H1 (cell line): ENCODE measurements at regions of chr17 and their contacts with region 1.

Region 1: DNA sequence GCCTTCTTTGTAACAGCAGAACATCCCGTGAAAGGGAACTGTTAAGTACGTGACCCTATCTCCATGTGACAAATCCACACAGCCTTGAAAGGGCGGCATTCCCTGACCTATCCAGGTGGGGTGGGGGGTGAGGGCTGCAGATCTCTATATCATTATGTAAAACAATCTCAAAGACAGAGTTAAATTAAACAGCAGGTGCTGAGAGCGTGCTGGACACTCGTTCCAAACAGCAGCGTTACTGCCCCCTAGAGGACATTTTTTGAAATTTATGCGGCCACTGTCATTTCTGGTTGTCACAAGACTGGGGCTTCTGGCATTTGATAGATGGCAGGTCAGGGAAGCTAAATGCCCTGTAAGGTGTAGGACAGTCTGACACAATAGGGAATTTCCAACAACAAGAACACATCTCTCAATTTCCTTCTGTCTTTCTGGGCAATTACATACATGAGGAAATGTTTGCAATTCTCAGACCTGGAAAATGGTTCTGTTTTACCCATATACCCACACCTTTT is 6.7 kb upstream of the SLC25A39 start:
- DNase-seq: peak in 1 of 2 experiments; percentile 86
- H3K4me3 ChIP-seq: no peak overlapping the region
- H3K27ac ChIP-seq: no peak overlapping the region
- H3K4me1 ChIP-seq: peaks cover 0 to 2% (median 2%) of the 10 kb centered on the region in 4 experiments; a peak in 4 of 7 replicates
- H3K27me3 ChIP-seq: peaks cover 0 to 2% (median under 1%) of the 10 kb centered on the region in 4 experiments; a peak in 3 of 7 replicates
- CTCF ChIP-seq: peak; percentile 53 to 79 (median 77)
- EP300 ChIP-seq: no peak
- POLR2A ChIP-seq: no peak
- RAD21 ChIP-seq: peak; percentile 66 to 73

Region 2: GRCh38 chr17:44199553-44200477 is 131.5 kb before region 1 on chr17 and contains the start of gene ATXN7L3:
- CTCF ChIA-PET with region 1: interaction called, 19 read pairs
- POLR2A ChIA-PET with region 1: interaction called, 5 read pairs
- DNase-seq: peak; percentile 92 to 97
- H3K4me3 ChIP-seq: peak within 1 kb of the TSS; percentile 77 to 98 (median 82)
- H3K27ac ChIP-seq: peak within 1 kb of the TSS; percentile 66
- H3K4me1 ChIP-seq: peaks cover 3 to 23% (median 8%) of the 10 kb centered on the region in 4 experiments
- H3K27me3 ChIP-seq: no peaks in the 10 kb centered on the region
- CTCF ChIP-seq: no peak
- EP300 ChIP-seq: no peak
- POLR2A ChIP-seq: peak; percentile 25 to 46; a peak in 2 of 3 replicates
- RAD21 ChIP-seq: no peak
- total RNA-seq, gene ATXN7L3: 103 and 106 TPM in 2 replicates

Region 3: DNA sequence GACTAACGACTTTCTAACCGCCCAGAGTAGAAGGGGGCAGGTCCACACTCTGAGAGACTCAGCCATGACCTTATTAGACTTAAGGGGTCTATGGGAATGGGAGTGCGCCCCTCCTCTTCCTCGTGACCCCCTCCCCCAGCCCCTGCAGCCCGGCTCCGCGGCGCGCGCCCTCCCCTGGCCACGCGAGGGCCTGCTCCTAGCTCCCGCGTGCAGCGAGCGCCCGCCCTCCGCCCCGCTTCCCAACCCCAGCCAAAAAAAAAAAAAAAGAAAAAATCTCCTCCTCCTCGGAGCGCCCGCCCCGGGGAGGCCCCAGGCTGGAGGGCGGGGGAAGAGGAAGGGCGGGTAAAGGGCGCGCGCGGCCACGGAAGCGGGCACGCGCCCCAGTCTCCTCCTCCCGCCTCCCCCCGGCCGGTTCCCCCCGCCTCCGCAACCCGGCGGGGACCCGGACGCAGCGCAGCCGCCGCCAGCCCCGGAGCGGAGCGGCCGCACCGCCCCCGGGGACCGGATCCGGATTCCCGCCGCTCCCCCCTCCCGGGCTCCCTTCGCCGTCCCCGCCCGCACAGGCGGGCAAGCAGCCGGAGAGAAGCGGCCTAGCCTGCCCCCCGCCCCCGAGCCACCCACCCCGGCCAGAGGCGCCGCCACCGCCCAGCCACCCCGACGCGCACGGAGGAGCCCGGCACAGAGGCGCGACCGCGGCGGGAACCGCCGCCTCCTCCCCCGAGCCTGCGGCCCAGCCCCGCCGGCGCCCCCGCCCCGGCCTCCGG is 112.8 kb before region 1 on chr17:
- CTCF ChIA-PET with region 1: interaction called, 158 read pairs
- POLR2A ChIA-PET with region 1: interaction called, 5 read pairs
- DNase-seq: peak in 1 of 2 experiments; percentile 83
- H3K4me3 ChIP-seq: peak overlapping the region; percentile 67 to 100 (median 84)
- H3K27ac ChIP-seq: peak overlapping the region; percentile 76; the same call in 1 of the 2 replicates
- H3K4me1 ChIP-seq: peaks cover 4 to 21% (median 5%) of the 10 kb centered on the region in 4 experiments; a peak in 6 of 7 replicates
- H3K27me3 ChIP-seq: no peaks in the 10 kb centered on the region
- CTCF ChIP-seq: peak; percentile 18 to 62 (median 57)
- EP300 ChIP-seq: 0 out of 3 replicates have a peak, but pooled peaks of 1 of the 2 experiments have one; percentile 19
- POLR2A ChIP-seq: peak; percentile 16 to 38; a peak in 2 of 3 replicates
- RAD21 ChIP-seq: peak; percentile 8 to 39; a peak in 3 of 4 replicates

Region 4: DNA sequence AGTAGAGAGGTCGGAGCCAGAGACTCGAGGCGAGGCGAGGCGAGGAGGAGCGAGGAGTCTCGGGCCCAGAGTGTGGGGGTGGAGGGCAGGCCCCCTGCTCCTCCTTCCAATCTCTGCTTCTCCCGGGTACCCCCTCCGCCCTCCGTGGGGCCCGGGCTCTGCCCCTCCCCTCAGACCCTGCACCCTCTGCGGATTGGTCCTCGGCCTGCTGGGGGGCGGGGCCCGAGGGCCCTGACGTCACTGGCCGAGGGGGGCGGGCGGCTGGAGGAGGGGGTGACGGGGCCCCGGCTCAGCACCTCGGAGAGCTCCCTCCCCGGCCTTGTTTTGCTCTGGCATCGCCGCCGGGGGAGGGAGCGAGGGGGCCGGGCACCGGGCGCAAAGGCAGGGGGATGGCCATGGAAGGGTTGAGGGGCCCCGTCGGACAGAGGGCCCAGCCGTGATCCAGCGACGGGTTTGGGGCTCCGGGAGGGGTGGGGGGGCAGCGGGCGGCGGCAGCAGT is 22.9 kb before region 1 on chr17 and contains the start of gene RUNDC3A:
- CTCF ChIA-PET with region 1: interaction called, 14 read pairs
- POLR2A ChIA-PET with region 1: interaction called, 28 read pairs
- DNase-seq: peak in 1 of 2 experiments; percentile 99
- H3K4me3 ChIP-seq: peak within 1 kb of the TSS; percentile 43 to 67 (median 54)
- H3K27ac ChIP-seq: no peak within 1 kb of the TSS
- H3K4me1 ChIP-seq: peaks cover 7 to 38% (median 26%) of the 10 kb centered on the region in 4 experiments
- H3K27me3 ChIP-seq: no peaks in the 10 kb centered on the region; a peak in 2 of 7 replicates
- CTCF ChIP-seq: no peak
- EP300 ChIP-seq: no peak
- POLR2A ChIP-seq: peak in 1 of 2 experiments; percentile 46; a peak in 1 of 3 replicates
- RAD21 ChIP-seq: no peak
- total RNA-seq, gene RUNDC3A: 6.1 and 6.4 TPM in 2 replicates

Region 5: GRCh38 chr17:44314869-44315661 is 16.2 kb before region 1 on chr17:
- CTCF ChIA-PET with region 1: interaction called, 42 read pairs
- POLR2A ChIA-PET with region 1: interaction called, 28 read pairs
- DNase-seq: peak in 1 of 2 experiments; percentile 81
- H3K4me3 ChIP-seq: peak overlapping the region; percentile 40 to 67 (median 60)
- H3K27ac ChIP-seq: no peak overlapping the region
- H3K4me1 ChIP-seq: peaks cover 7 to 36% (median 29%) of the 10 kb centered on the region in 4 experiments
- H3K27me3 ChIP-seq: peaks cover 0 to 19% (median 17%) of the 10 kb centered on the region in 4 experiments; a peak in 6 of 7 replicates
- CTCF ChIP-seq: no peak
- EP300 ChIP-seq: no peak
- POLR2A ChIP-seq: no peak
- RAD21 ChIP-seq: no peak

Region 6: GRCh38 chr17:44344939-44345453 is 13.7 kb after region 1 on chr17 and contains the start of gene GRN:
- CTCF ChIA-PET with region 1: interaction called, 70 read pairs
- POLR2A ChIA-PET with region 1: interaction called, 15 read pairs
- DNase-seq: peak; percentile 89 to 92
- H3K4me3 ChIP-seq: peak within 1 kb of the TSS; percentile 52 to 95 (median 78)
- H3K27ac ChIP-seq: 0 out of 2 replicates have a peak within 1 kb of the TSS, but pooled peaks have one; percentile 16
- H3K4me1 ChIP-seq: peaks cover 0 to 2% (median 0%) of the 10 kb centered on the region in 4 experiments; a peak in 3 of 7 replicates
- H3K27me3 ChIP-seq: peaks cover 0 to 3% (median 0%) of the 10 kb centered on the region in 4 experiments; a peak in 3 of 7 replicates
- CTCF ChIP-seq: no peak; a peak in 1 of 4 replicates
- EP300 ChIP-seq: peak in 1 of 2 experiments; percentile 67; a peak in 1 of 3 replicates
- POLR2A ChIP-seq: peak; percentile 76 to 86
- RAD21 ChIP-seq: no peak
- total RNA-seq, gene GRN: 108 and 117 TPM in 2 replicates

Region 7: GRCh38 chr17:44350733-44351226 is 19.5 kb after region 1 on chr17:
- CTCF ChIA-PET with region 1: interaction called, 70 read pairs
- POLR2A ChIA-PET with region 1: interaction called, 15 read pairs
- DNase-seq: peak in 1 of 2 experiments; percentile 90
- H3K4me3 ChIP-seq: no peak overlapping the region
- H3K27ac ChIP-seq: no peak overlapping the region
- H3K4me1 ChIP-seq: peaks cover 0 to 8% (median 4%) of the 10 kb centered on the region in 4 experiments; a peak in 4 of 7 replicates
- H3K27me3 ChIP-seq: no peaks in the 10 kb centered on the region; a peak in 2 of 7 replicates
- CTCF ChIP-seq: peak; percentile 82 to 95 (median 90)
- EP300 ChIP-seq: no peak
- POLR2A ChIP-seq: no peak
- RAD21 ChIP-seq: peak; percentile 81 to 82